Transverse colon (tissue), 4 donors: ENCODE measurements at regions of chr12 and their contacts with region 1.

Region 1: DNA sequence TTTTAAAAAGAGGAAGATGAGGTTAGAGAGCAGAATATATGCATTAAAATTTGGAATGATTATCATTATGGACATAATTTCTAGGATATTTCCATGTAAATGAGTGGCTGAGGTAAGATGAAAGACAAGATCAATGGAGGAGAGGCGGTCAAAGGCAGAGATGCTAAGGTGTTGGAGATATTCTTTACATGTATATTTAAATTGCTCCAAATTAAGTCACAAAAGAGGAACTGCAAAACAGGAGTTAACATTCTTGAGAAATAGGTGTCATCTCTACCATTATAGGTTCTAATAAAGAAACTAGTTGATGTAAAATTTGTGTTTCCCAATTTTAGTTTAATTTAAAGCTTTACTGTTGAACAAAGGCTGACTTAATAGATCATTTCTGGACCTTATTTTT is 268.5 kb upstream of the PPFIA2 start:
- DNase-seq: no peak
- H3K4me3 ChIP-seq: no peak overlapping the region
- H3K27ac ChIP-seq: no peak overlapping the region
- H3K4me1 ChIP-seq: no peaks in the 10 kb centered on the region
- H3K27me3 ChIP-seq: no peaks in the 10 kb centered on the region
- CTCF ChIP-seq: no peak
- EP300 ChIP-seq: no peak
- POLR2A ChIP-seq: no peak

Region 2: DNA sequence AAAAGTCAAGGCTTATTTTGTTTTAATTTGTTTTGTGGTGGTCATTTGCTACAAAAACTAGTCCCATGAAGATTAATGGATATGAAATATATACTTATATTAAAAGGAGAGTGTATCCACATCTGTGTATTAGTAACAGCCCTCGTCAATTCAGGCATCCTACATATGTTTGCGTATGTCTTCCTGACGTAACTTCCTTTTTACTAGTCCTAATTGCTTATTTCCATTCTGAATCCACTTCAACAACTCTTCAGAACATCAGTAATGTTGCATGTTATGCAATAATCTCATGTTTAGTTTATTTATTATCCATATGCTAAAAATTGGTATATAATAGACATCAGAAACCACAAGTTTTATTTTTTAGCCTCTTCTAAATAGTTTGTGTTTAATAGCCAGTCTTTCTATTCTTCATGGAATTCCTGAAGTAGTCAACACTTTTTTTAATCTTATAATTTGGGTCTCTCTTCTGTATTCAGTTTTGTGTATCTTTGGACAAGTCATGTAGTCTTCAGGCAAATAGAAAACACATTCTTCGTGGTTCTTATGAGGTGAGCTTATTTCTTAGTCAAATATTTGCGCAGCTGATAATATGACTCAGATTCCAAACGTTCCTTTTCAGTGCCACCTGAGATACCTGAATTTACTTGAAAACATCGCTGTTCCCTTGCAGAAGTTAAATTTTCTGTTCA is 61.9 kb after region 1 on chr12:
- in situ Hi-C with region 1: loop called in 1 of 4 experiments (anchors 10 kb)
- intact Hi-C with region 1: no loop called
- DNase-seq: no peak
- H3K4me3 ChIP-seq: no peak overlapping the region
- H3K27ac ChIP-seq: no peak overlapping the region
- H3K4me1 ChIP-seq: no peaks in the 10 kb centered on the region
- H3K27me3 ChIP-seq: no peaks in the 10 kb centered on the region
- CTCF ChIP-seq: no peak
- EP300 ChIP-seq: no peak
- POLR2A ChIP-seq: no peak